ENCODE measurements at regions of chr1 and their contacts with region 1.

Region 1: DNA sequence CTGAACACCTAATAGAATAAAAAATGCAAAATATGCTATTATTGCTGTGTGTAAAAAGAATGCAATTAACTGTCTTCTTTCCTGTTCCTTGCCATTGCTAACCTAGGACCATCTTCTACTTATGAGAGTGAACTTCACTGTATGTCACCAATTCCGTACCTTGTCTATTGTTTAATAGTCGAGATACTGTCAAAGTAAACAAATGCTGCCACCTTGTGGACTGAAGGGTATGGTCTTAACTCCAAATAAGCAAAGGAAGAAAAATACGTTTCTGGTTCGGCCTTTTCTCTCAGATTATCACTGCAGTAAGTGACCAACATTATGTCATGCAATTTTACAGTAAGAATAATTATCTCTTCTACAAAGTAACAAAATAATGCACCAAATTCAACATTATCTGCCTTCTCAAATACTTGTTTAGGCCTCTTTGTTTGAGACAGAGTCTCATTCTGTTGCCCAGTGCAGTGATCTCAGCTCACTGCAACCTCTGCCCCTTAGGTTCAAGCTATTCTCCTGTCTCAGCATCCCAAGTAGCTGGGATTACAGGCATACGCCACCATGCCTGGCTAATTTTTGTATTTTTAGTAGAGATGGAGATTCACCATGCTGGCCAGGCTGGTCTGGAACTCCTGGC is 133.4 kb downstream of the COP1 start:
- DNase-seq: no peak
- ATAC-seq: peak; percentile 69
- H3K4me3 ChIP-seq: no peak overlapping the region
- H3K27ac ChIP-seq: no peak overlapping the region
- H3K4me1 ChIP-seq: no peaks in the 10 kb centered on the region
- H3K27me3 ChIP-seq: no peaks in the 10 kb centered on the region

Region 2: DNA sequence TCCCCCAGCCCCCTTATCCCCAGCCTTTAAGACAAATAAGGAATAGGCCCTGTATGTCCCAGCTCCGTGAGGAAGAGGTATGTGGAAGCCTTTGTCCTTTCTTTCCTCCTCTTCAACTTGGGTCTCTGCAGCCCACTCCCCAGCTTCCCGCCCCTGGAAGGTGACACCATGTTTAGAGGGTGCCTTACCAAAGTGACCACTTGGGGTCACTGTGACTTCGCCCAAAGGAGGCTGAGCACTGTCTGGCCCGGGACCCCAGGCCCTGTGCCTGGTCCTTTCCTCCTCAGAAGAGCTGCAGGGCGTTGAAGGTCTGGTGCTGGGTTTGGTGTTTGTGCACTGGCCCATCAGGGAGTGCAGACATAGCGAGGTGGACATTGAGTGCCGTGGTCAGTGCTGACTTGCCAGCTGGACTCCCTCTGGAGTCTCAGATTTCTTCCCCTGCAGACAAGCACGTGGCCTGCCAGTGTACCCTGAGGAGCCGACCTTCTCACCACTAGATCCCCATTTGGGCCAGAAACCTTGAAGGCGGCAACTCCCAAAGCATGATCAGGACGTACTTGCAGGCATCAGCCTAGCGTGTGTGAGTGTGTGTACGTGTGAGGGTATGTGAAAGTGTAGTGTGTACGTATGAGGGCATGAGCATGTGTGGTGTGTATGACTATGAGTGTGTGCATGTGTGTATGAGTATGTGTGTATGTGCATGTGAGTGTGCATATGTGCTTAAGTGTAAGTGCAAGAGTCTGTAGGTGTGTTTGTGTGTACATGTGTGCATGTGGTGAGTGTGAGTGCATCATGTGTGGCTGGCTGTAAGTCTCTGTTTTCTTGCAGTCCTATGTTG is 699.6 kb before region 1 on chr1:
- intact Hi-C with region 1: loop called in 1 of 2 experiments (anchors 2 kb)
- DNase-seq: no peak
- ATAC-seq: peak; percentile 70
- H3K4me3 ChIP-seq: no peak overlapping the region
- H3K27ac ChIP-seq: no peak overlapping the region
- H3K4me1 ChIP-seq: no peaks in the 10 kb centered on the region
- H3K27me3 ChIP-seq: no peaks in the 10 kb centered on the region

Region 3: GRCh38 chr1:175481126-175482066 is 592.2 kb before region 1 on chr1:
- intact Hi-C with region 1: loop called (anchors 2 to 5 kb)
- DNase-seq: no peak
- ATAC-seq: peak; percentile 51
- H3K4me3 ChIP-seq: no peak overlapping the region
- H3K27ac ChIP-seq: no peak overlapping the region
- H3K4me1 ChIP-seq: peaks cover 0 to 4% of the 10 kb centered on the region in 2 donors
- H3K27me3 ChIP-seq: no peaks in the 10 kb centered on the region

Region 4: DNA sequence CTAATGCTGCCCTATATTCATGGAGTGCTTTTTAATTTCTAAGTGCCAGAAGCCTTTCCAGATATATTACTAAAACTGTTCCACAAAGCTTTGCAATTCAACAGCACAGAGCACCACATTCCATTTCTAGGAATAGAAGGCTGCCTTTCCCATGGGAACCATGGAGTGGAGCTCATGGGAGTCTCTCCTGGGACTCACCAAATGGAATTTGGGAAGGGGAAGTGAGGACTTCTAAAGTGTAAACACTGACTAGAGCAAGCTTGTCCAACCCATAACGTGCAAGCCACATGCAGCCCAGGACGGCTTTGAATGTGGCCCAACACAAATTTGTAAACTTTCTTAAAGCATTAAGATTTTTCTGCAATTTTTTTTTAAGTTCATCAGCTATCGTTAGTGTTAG is 139.8 kb before region 1 on chr1:
- intact Hi-C with region 1: loop called in 1 of 2 experiments (anchors 10 kb)
- DNase-seq: no peak
- ATAC-seq: peak; percentile 73
- H3K4me3 ChIP-seq: no peak overlapping the region
- H3K27ac ChIP-seq: no peak overlapping the region
- H3K4me1 ChIP-seq: peaks cover 3 to 8% of the 10 kb centered on the region in 2 donors
- H3K27me3 ChIP-seq: no peaks in the 10 kb centered on the region

Measured in aorta (tissue), 5 donors.